ENCODE measurements at regions of chr15 and their contacts with region 1.

Region 1: GRCh38 chr15:58182460-58183163 is 44.4 kb downstream of the AQP9 start:
- DNase-seq: peak; percentile 55
- H3K4me3 Mint-ChIP-seq: no peak overlapping the region
- H3K27ac Mint-ChIP-seq: no peak overlapping the region
- H3K4me1 Mint-ChIP-seq: peaks cover 12% of the 10 kb centered on the region
- H3K27me3 Mint-ChIP-seq: peaks cover 10% of the 10 kb centered on the region
- CTCF ChIP-seq: peak; percentile 88

Region 2: GRCh38 chr15:57751177-57751800 is 431.3 kb before region 1 on chr15:
- CTCF ChIA-PET with region 1: interaction called, 27 read pairs
- POLR2A ChIA-PET with region 1: no interaction called
- intact Hi-C with region 1: loop called (anchors 5 kb)
- DNase-seq: peak; percentile 51
- H3K4me3 Mint-ChIP-seq: no peak overlapping the region
- H3K27ac Mint-ChIP-seq: no peak overlapping the region
- H3K4me1 Mint-ChIP-seq: no peaks in the 10 kb centered on the region
- H3K27me3 Mint-ChIP-seq: no peaks in the 10 kb centered on the region
- CTCF ChIP-seq: peak; percentile 59

Region 3: GRCh38 chr15:57866149-57866736 is 316.4 kb before region 1 on chr15:
- CTCF ChIA-PET with region 1: interaction called, 33 read pairs
- POLR2A ChIA-PET with region 1: interaction called, 3 read pairs
- intact Hi-C with region 1: loop called (anchors 1 kb)
- DNase-seq: peak; percentile 74
- H3K4me3 Mint-ChIP-seq: no peak overlapping the region
- H3K27ac Mint-ChIP-seq: no peak overlapping the region
- H3K4me1 Mint-ChIP-seq: peaks cover 7% of the 10 kb centered on the region
- H3K27me3 Mint-ChIP-seq: no peaks in the 10 kb centered on the region
- CTCF ChIP-seq: peak; percentile 80

Region 4: GRCh38 chr15:58077427-58077826 is 105.2 kb before region 1 on chr15:
- CTCF ChIA-PET with region 1: interaction called, 113 read pairs
- POLR2A ChIA-PET with region 1: interaction called, 8 read pairs
- intact Hi-C with region 1: loop called (anchors 1 kb)
- DNase-seq: peak; percentile 36
- H3K4me3 Mint-ChIP-seq: no peak overlapping the region
- H3K27ac Mint-ChIP-seq: no peak overlapping the region
- H3K4me1 Mint-ChIP-seq: peaks cover 8% of the 10 kb centered on the region
- H3K27me3 Mint-ChIP-seq: no peaks in the 10 kb centered on the region
- CTCF ChIP-seq: peak; percentile 49

Region 5: DNA sequence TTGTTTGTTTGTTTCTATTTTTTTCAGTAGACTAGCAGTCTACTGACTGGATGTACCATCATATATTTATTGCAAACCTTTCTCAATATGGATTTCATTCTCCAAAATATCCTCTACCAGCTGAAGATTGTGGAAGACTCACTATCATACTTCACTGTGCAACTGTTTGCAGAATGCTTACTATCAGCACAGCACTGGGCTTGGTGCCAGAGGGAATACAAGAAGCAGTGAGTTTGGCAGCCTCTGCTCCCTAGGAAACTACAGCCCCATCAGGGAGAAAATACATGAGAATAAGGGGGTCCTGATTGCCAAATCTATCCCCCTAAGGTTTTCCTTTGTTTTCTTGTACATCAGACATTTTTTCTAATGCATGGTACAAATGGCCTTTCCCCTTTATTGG is 17.0 kb before region 1 on chr15:
- CTCF ChIA-PET with region 1: interaction called, 23 read pairs
- POLR2A ChIA-PET with region 1: no interaction called
- intact Hi-C with region 1: no loop called
- DNase-seq: peak; percentile 24
- H3K4me3 Mint-ChIP-seq: no peak overlapping the region
- H3K27ac Mint-ChIP-seq: no peak overlapping the region
- H3K4me1 Mint-ChIP-seq: peaks cover 4% of the 10 kb centered on the region
- H3K27me3 Mint-ChIP-seq: peaks cover 23% of the 10 kb centered on the region
- CTCF ChIP-seq: no peak

Region 6: DNA sequence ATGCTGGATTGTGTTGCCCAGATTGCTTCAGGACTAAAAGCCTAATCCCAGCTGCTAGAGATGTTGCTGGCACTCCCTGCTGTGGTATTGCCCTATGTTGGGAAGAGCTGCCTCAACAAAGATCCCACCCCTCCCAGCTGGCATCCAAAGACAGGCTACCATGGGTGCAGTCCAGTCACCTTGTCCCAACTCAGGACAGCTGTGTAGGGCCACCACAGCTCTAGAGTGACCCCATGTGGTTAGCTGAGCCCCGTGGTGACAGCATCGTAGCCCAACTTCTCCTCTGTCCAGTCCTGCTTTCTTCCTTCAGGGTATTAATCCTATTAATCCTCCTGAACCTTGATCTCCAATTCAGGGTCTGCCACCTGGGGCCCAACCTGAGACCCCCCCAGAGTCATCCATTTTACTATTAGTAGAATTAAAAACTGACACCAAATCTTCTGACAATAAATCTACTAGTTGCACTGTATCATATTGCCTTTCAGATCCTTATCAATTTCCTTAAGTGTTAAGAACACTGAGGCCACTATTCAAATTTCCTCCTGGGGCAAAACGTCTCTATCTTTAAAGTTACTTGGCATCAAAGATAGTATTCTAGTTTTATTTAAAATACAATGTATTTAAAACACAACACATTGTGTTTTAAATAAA is 39.1 kb after region 1 on chr15:
- CTCF ChIA-PET with region 1: interaction called, 21 read pairs
- POLR2A ChIA-PET with region 1: no interaction called
- intact Hi-C with region 1: loop called (anchors 1 kb)
- DNase-seq: peak; percentile 62
- H3K4me3 Mint-ChIP-seq: no peak overlapping the region
- H3K27ac Mint-ChIP-seq: no peak overlapping the region
- H3K4me1 Mint-ChIP-seq: no peaks in the 10 kb centered on the region
- H3K27me3 Mint-ChIP-seq: no peaks in the 10 kb centered on the region
- CTCF ChIP-seq: peak; percentile 50

Measured in MCF 10A (cell line).